ENCODE measurements at regions of chr1 and their contacts with region 1.

Region 1: GRCh38 chr1:167270349-167271092 is 49.8 kb downstream of the POU2F1 start:
- DNase-seq: no peak
- H3K4me3 ChIP-seq: no peak overlapping the region
- H3K27ac ChIP-seq: no peak overlapping the region
- H3K4me1 ChIP-seq: peaks cover 2 to 29% (median 21%) of the 10 kb centered on the region in 4 experiments
- H3K27me3 ChIP-seq: no peaks in the 10 kb centered on the region

Region 2: DNA sequence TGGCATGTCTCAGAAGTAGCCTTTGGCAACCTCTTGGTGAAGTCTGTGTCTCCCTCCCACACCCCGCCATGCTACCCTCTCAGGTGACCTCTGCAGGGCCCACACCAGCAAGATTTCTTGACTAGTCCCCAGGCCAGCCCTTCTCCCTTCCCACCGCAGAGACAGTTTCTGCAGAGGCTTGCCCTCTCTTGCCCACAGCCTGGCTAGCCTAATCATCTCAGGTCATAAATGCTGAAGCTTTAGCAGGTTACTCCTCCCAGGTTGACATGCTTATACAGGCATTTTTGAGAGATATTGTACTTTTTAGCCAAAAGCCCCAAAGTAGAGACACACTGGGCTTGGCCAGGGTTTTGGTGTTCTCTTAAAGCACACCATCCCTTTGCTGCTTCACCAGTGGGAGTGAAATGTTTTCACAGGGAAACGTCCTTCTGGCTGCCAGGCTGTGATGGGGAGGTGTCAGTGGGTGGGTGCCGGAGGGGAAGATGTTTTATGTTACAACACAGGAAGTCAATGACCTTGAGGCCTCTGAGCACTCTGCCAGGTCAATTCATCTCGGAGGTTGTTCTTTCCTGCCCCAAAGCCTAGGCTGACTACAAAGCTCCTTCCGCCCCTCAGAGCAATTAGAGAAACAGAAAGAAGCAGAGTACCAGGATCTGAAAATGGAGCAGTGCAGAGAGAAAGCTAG is 118.2 kb before region 1 on chr1:
- CTCF ChIA-PET with region 1: no interaction called
- POLR2A ChIA-PET with region 1: no interaction called
- DNase-seq: no peak
- H3K4me3 ChIP-seq: no peak overlapping the region
- H3K27ac ChIP-seq: no peak overlapping the region
- H3K4me1 ChIP-seq: peaks cover 0 to 37% (median 6%) of the 10 kb centered on the region in 4 experiments
- H3K27me3 ChIP-seq: no peaks in the 10 kb centered on the region

Region 3: GRCh38 chr1:167280912-167281311 is 10.4 kb after region 1 on chr1:
- CTCF ChIA-PET with region 1: interaction called, 15 read pairs
- POLR2A ChIA-PET with region 1: no interaction called
- DNase-seq: no peak
- H3K4me3 ChIP-seq: no peak overlapping the region
- H3K27ac ChIP-seq: no peak overlapping the region
- H3K4me1 ChIP-seq: peaks cover 2 to 9% (median 6%) of the 10 kb centered on the region in 4 experiments
- H3K27me3 ChIP-seq: no peaks in the 10 kb centered on the region

Region 4: DNA sequence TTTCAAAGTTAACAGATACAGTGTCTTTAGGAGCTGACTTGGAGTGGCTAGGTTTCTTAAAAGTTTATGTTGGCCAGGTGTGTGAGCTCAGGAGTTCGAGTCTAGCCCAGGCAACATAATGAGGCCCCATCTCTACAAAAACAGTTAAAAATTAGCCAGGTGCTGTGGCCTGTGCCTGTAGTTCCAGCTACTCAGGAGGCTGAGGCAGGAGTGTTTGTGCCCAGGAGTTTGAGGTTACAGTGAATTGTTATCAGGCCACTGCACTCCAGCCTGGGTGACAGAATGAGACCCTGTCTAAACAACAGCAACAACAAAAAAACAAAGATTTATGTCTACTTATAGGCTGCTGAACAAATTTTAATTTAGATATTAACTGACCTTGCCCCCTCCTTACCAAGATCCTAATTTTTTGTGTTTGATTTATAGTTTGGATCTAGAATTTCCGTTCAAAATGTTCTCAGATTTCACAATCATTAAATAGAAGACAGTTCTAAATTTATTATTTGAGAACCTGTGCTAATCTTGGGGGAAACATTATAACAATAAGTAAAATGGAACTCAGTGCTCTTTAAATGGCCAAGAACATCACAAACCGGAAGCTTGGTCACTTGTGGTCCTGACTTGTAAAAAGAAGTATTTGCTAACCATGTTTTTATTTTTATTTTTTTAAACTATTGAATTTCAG is 18.0 kb after region 1 on chr1:
- CTCF ChIA-PET with region 1: interaction called, 15 read pairs
- POLR2A ChIA-PET with region 1: interaction called, 4 read pairs
- DNase-seq: peak in 2 of 3 donors; percentile 56 to 77
- H3K4me3 ChIP-seq: no peak overlapping the region
- H3K27ac ChIP-seq: no peak overlapping the region
- H3K4me1 ChIP-seq: peaks cover 2 to 28% (median 9%) of the 10 kb centered on the region in 4 experiments
- H3K27me3 ChIP-seq: no peaks in the 10 kb centered on the region

Region 5: DNA sequence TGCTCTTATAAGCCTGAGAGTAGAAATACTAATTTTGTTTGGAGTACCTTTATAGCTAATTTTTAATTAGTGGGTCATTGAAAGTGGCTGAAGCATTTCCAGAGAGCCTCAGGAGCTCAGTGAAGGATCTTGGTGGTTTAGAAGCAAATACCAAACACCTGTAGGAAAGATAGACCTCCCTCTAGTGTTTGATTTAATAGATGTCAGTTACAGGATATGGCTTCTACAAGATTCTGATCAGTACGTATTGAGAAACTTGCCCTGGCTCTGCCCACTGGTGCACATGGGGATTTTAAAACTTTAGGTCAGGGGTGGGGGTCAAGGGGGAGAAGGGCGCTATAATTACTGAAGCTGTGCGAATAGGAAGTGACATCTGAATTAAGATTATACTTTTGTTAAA is 72.3 kb after region 1 on chr1:
- CTCF ChIA-PET with region 1: interaction called, 35 read pairs
- POLR2A ChIA-PET with region 1: no interaction called
- DNase-seq: peak; percentile 44 to 58 (median 49)
- H3K4me3 ChIP-seq: peak overlapping the region in 1 of 7 experiments; percentile 28
- H3K27ac ChIP-seq: no peak overlapping the region
- H3K4me1 ChIP-seq: peaks cover 0 to 13% (median 4%) of the 10 kb centered on the region in 4 experiments
- H3K27me3 ChIP-seq: no peaks in the 10 kb centered on the region

Region 6: GRCh38 chr1:167401260-167401873 is 130.8 kb after region 1 on chr1:
- CTCF ChIA-PET with region 1: interaction called, 16 read pairs
- POLR2A ChIA-PET with region 1: interaction called, 4 read pairs
- DNase-seq: peak; percentile 51 to 73 (median 69)
- H3K4me3 ChIP-seq: no peak overlapping the region
- H3K27ac ChIP-seq: no peak overlapping the region
- H3K4me1 ChIP-seq: no peaks in the 10 kb centered on the region
- H3K27me3 ChIP-seq: no peaks in the 10 kb centered on the region

Region 7: GRCh38 chr1:167442124-167442848 is 171.8 kb after region 1 on chr1:
- CTCF ChIA-PET with region 1: interaction called, 35 read pairs
- POLR2A ChIA-PET with region 1: no interaction called
- DNase-seq: peak; percentile 80 to 89 (median 87)
- H3K4me3 ChIP-seq: no peak overlapping the region
- H3K27ac ChIP-seq: no peak overlapping the region
- H3K4me1 ChIP-seq: peaks cover 5 to 24% (median 19%) of the 10 kb centered on the region in 4 experiments
- H3K27me3 ChIP-seq: peaks cover 0 to 10% (median 0%) of the 10 kb centered on the region in 5 experiments

Region 8: DNA sequence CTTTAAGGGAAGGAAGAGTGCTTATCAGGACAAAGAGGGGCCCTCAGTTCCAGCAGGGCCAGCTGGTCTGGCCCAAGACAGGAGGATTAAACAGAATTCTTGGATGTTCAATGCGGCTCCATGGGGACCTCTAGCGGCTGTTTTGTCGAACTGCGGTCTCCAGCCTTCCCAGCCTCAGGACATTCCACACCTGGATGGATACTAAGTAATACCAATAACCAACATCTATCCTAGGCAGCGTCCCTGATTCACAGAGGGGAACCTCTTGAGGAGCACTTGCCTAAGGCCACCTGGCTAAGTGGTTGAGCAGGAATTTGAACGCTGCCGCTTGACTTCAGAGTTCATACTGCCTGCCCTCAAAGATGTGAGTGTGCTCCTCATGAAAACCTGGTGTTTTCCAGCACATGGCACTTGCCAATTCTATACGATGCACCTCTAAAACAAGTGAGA is 263.4 kb after region 1 on chr1:
- CTCF ChIA-PET with region 1: interaction called, 14 read pairs
- POLR2A ChIA-PET with region 1: no interaction called
- DNase-seq: peak; percentile 54 to 73 (median 61)
- H3K4me3 ChIP-seq: no peak overlapping the region
- H3K27ac ChIP-seq: no peak overlapping the region
- H3K4me1 ChIP-seq: peaks cover 0 to 9% (median 1%) of the 10 kb centered on the region in 4 experiments
- H3K27me3 ChIP-seq: no peaks in the 10 kb centered on the region

Measured in common myeloid progenitor, CD34-positive (primary cell).